GM13976 (cell line): ENCODE measurements at regions of chr4 and their contacts with region 1.

Region 1: GRCh38 chr4:48602222-48602621 is 112.2 kb downstream of the ZAR1 start:
- DNase-seq: no peak
- CTCF ChIP-seq: no peak

Region 2: GRCh38 chr4:48195374-48195773 is 406.8 kb before region 1 on chr4:
- in situ Hi-C with region 1: no loop called
- DNase-seq: no peak
- CTCF ChIP-seq: no peak

Region 3: DNA sequence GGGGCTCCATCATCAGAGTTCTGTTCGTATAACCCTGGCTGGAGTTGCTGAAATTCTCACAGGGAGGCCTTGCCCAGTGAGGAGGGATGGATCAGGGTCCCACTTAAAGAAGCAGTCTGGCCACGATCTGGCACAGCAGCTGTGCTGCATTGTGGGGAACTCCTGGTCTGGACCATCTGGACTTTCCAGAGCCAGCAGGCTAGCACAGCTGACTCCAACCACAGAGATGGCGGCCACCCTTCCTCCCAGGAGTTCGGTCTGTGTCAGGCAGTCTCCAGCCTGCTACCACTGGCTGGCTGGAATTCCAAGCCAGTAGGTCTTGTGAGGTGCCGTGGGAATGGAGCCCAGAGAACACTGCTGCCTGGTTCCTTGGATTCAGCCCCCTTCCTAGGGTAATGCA is 198.9 kb before region 1 on chr4:
- in situ Hi-C with region 1: no loop called
- DNase-seq: no peak
- CTCF ChIP-seq: no peak

Region 4: GRCh38 chr4:48420144-48420543 is 182.1 kb before region 1 on chr4:
- in situ Hi-C with region 1: no loop called
- DNase-seq: no peak
- CTCF ChIP-seq: no peak

Region 5: GRCh38 chr4:48681856-48682255 is 79.6 kb after region 1 on chr4:
- in situ Hi-C with region 1: no loop called
- DNase-seq: peak; percentile 36
- CTCF ChIP-seq: peak; percentile 36

Region 6: DNA sequence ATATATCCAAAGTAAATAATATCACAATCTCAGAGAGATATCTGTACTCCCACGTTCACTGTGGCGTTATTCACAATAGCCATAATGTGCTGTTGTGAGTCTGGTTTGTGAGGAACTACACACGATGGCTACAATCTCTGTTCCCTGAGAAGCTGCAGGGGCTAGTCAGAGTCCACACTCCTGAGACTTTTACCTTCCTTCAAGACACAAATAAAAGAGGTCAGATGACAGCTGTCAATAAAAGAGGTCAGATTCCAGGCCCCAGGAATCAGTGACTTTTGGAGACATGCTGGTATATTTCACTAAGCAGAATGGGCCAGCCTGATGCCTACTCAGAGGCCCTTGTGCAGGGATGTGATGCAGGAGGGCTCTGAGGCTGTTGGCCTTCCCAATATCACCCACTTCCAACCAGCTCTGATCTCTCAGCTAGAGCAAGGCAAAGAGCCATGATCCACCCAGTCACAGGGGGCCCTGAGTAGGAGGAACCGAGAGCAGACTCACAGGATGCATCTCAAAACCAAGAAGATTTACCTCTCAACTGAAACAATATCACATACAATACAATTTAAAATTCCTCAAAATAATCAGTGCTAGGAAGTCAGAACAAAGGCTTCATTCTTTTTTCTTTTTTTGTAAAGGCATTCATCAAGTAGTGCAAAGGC is 164.0 kb after region 1 on chr4:
- in situ Hi-C with region 1: loop called (anchors 10 kb)
- DNase-seq: peak; percentile 29
- CTCF ChIP-seq: no peak